ENCODE measurements at regions of chr1 and their contacts with region 1.

Region 1: GRCh38 chr1:224851210-224851847 is 78.1 kb upstream of the DNAH14 start:
- DNase-seq: peak; percentile 45
- H3K4me3 ChIP-seq: no peak overlapping the region
- H3K27ac ChIP-seq: no peak overlapping the region
- H3K4me1 ChIP-seq: no peaks in the 10 kb centered on the region
- H3K27me3 ChIP-seq: no peaks in the 10 kb centered on the region
- CTCF ChIP-seq: peak; percentile 80
- EP300 ChIP-seq: no peak
- RAD21 ChIP-seq: peak; percentile 68

Region 2: DNA sequence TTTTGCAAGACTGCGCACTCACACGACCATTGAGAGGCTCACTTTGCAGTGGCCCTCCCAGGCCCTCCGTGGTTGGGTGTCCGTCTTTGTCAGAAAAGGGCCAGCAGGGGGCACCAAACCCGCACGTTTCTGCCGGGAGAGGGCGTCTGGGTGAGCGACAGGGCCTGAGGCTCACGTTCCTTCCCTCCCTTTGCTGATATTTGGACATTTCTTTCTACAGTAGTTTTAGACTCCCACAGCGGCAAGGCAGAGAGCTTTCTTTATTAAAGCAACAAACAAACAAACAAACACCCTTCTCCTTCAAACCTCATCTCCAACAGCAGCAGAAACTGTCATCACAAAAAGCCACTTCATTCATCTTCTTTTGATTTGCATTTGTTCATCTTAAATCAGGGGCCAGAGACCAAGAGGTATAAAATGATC is 337.5 kb before region 1 on chr1:
- CTCF ChIA-PET with region 1: interaction called, 166 read pairs
- POLR2A ChIA-PET with region 1: no interaction called
- DNase-seq: peak; percentile 89
- H3K4me3 ChIP-seq: peak overlapping the region in 1 of 2 experiments; percentile 27; a peak in 1 of 4 replicates
- H3K27ac ChIP-seq: no peak overlapping the region
- H3K4me1 ChIP-seq: peaks cover 0 to 3% of the 10 kb centered on the region in 2 experiments; a peak in 2 of 4 replicates
- H3K27me3 ChIP-seq: no peaks in the 10 kb centered on the region
- CTCF ChIP-seq: peak; percentile 92
- EP300 ChIP-seq: no peak
- RAD21 ChIP-seq: peak; percentile 97

Region 3: DNA sequence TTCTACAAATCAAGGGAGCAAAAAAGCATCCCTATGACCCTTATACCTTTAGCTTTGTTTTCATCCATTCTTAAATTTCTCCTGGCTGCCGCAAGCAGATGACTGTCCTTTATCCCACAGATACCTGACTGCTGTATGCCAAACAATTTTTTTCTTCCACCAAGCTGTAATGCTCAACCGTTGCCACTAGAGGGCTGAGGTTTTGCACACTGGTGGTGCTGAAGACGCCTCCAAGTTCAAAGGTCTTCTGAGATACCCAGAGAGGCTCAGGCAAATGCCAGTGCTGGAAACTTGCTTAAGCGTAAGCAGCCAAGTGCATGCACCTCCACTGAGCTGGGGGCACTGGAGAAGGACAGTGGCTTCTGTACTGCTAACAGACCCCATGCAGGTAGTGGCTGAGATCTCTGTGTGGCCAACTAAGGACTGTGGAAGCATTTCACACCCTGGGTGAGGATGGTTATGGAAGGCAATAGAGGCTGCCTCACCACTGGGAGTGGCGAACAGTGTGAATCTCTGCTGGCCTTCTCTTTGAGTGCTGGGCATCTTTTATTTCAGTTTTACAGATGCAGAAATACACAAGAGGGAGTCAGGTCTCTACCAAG is 206.7 kb before region 1 on chr1:
- CTCF ChIA-PET with region 1: interaction called, 29 read pairs
- POLR2A ChIA-PET with region 1: no interaction called
- DNase-seq: peak; percentile 59
- H3K4me3 ChIP-seq: no peak overlapping the region; a peak in 1 of 4 replicates
- H3K27ac ChIP-seq: no peak overlapping the region
- H3K4me1 ChIP-seq: peaks cover 0 to 6% of the 10 kb centered on the region in 2 experiments; a peak in 1 of 4 replicates
- H3K27me3 ChIP-seq: no peaks in the 10 kb centered on the region
- CTCF ChIP-seq: peak; percentile 85
- EP300 ChIP-seq: no peak
- RAD21 ChIP-seq: peak; percentile 78

Region 4: GRCh38 chr1:224828691-224829090 is 22.6 kb before region 1 on chr1:
- CTCF ChIA-PET with region 1: interaction called, 12 read pairs
- POLR2A ChIA-PET with region 1: no interaction called
- DNase-seq: no peak
- H3K4me3 ChIP-seq: no peak overlapping the region
- H3K27ac ChIP-seq: no peak overlapping the region
- H3K4me1 ChIP-seq: no peaks in the 10 kb centered on the region
- H3K27me3 ChIP-seq: no peaks in the 10 kb centered on the region
- CTCF ChIP-seq: no peak
- EP300 ChIP-seq: no peak
- RAD21 ChIP-seq: no peak

Region 5: DNA sequence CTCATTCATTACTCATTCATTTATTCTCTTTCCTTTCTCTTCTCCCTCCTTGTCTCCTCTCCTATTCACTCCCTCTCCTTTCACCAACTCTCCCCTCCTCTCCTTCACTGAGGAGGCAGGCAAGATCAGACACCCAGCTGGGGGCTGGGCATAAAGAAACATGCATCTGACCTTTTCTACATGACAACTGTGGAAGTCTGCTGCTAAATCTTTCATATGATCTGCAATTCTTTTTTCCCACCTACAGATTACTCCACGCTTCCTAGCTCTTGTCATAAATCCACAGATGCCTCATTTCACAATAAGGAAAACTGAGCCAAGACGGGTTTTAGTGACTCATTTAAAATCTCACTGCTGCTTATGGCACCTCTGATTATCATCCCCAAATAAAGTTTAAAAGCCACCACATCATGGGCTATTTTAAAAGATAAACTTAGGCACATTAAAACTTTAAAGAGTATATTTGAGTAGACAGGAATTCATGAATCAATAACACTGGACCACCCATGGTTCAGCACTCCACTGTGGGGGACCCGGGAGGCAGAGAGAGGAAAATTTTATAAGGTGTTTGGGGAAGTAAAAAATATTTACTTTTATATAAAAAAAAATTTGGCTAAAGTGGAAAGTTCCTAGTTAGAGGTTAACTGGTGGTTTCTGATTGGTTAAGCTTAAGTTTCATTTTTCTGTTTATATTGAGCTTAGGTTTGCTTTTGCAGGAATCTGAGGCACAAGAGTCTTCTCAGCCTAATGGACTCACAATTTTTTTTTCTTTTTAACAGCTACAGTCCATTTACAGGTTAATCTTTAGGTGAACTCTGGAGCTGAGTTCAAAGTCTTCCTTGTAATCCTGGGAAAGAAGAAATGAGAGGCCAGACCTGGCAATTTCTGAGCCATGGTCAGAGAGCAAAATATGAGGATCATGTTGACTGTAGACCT is 22.4 kb after region 1 on chr1:
- CTCF ChIA-PET with region 1: interaction called, 23 read pairs
- POLR2A ChIA-PET with region 1: no interaction called
- DNase-seq: no peak
- H3K4me3 ChIP-seq: no peak overlapping the region
- H3K27ac ChIP-seq: no peak overlapping the region
- H3K4me1 ChIP-seq: peaks cover 3 to 6% of the 10 kb centered on the region in 2 experiments; a peak in 3 of 4 replicates
- H3K27me3 ChIP-seq: no peaks in the 10 kb centered on the region
- CTCF ChIP-seq: no peak
- EP300 ChIP-seq: no peak
- RAD21 ChIP-seq: no peak

Region 6: GRCh38 chr1:224922404-224923164 is 71.3 kb after region 1 on chr1:
- CTCF ChIA-PET with region 1: interaction called, 18 read pairs
- POLR2A ChIA-PET with region 1: no interaction called
- DNase-seq: peak; percentile 61
- H3K4me3 ChIP-seq: peak overlapping the region in 1 of 2 experiments; percentile 35; a peak in 1 of 4 replicates
- H3K27ac ChIP-seq: no peak overlapping the region
- H3K4me1 ChIP-seq: no peaks in the 10 kb centered on the region; a peak in 1 of 4 replicates
- H3K27me3 ChIP-seq: no peaks in the 10 kb centered on the region
- CTCF ChIP-seq: peak; percentile 86
- EP300 ChIP-seq: no peak
- RAD21 ChIP-seq: peak; percentile 91

Measured in SK-N-SH (cell line).